CD8-positive, alpha-beta T cell (primary cell): ENCODE measurements at regions of chr11 and their contacts with region 1.

Region 1: GRCh38 chr11:66069715-66070603 is at the start of gene PACS1:
- DNase-seq: peak; percentile 56 to 94 (median 82)
- ATAC-seq: peak; percentile 68
- H3K4me3 ChIP-seq: peak within 1 kb of the TSS; percentile 62 to 74
- H3K4me3 Mint-ChIP-seq: peak within 1 kb of the TSS; percentile 92
- H3K27ac ChIP-seq: peak within 1 kb of the TSS; percentile 49 to 81
- H3K27ac Mint-ChIP-seq: peak within 1 kb of the TSS; percentile 95
- H3K4me1 ChIP-seq: peaks cover 41% of the 10 kb centered on the region
- H3K4me1 Mint-ChIP-seq: peaks cover 67% of the 10 kb centered on the region
- H3K27me3 ChIP-seq: no peaks in the 10 kb centered on the region
- H3K27me3 Mint-ChIP-seq: no peaks in the 10 kb centered on the region
- CTCF ChIP-seq: no peak
- total RNA-seq, gene PACS1: 161 to 176 TPM

Region 2: DNA sequence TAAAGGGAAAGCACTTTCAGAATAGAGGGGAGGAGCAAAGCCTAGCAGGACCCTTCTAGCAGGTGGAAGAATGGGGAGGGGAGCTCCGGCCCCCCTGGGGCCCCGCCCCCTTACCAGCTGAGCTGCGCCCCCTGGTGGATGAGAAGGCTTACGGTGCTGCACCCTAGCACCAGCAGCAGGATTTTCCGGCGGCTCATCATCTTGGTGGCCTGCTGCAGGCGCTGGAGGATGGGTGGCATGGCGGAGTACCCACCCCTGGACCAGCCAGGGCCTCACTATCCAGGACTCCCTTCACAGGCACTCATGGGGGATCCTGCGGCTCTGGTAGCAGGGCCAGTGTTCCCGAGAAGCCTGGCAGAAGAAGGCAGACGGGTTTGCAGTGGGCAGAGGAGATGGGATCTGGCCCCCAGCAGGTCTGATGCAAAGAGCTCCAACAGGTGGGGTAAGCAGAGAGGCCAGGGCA is 24.8 kb before region 1 on chr11:
- CTCF ChIA-PET with region 1: interaction called, 11 read pairs
- POLR2A ChIA-PET with region 1: interaction called, 8 read pairs
- intact Hi-C with region 1: no loop called
- DNase-seq: peak; percentile 60 to 90 (median 87)
- ATAC-seq: peak; percentile 98
- H3K4me3 ChIP-seq: no peak overlapping the region
- H3K4me3 Mint-ChIP-seq: no peak overlapping the region
- H3K27ac ChIP-seq: no peak overlapping the region
- H3K27ac Mint-ChIP-seq: no peak overlapping the region
- H3K4me1 ChIP-seq: peaks cover 13% of the 10 kb centered on the region
- H3K4me1 Mint-ChIP-seq: peaks cover 12% of the 10 kb centered on the region
- H3K27me3 ChIP-seq: no peaks in the 10 kb centered on the region
- H3K27me3 Mint-ChIP-seq: no peaks in the 10 kb centered on the region
- CTCF ChIP-seq: peak; percentile 83

Region 3: GRCh38 chr11:66081505-66081904 is 11.5 kb after region 1 on chr11:
- CTCF ChIA-PET with region 1: interaction called, 38 read pairs
- POLR2A ChIA-PET with region 1: interaction called, 43 read pairs
- intact Hi-C with region 1: loop called (anchors 1 kb)
- DNase-seq: peak; percentile 58 to 92 (median 85)
- ATAC-seq: peak; percentile 89
- H3K4me3 ChIP-seq: peak overlapping the region; percentile 28 to 40
- H3K4me3 Mint-ChIP-seq: peak overlapping the region; percentile 83
- H3K27ac ChIP-seq: peak overlapping the region; percentile 72 to 89
- H3K27ac Mint-ChIP-seq: peak overlapping the region; percentile 99
- H3K4me1 ChIP-seq: peaks cover 90% of the 10 kb centered on the region
- H3K4me1 Mint-ChIP-seq: peaks cover 92% of the 10 kb centered on the region
- H3K27me3 ChIP-seq: no peaks in the 10 kb centered on the region
- H3K27me3 Mint-ChIP-seq: no peaks in the 10 kb centered on the region
- CTCF ChIP-seq: no peak

Region 4: GRCh38 chr11:66106786-66107599 is 37.0 kb after region 1 on chr11:
- CTCF ChIA-PET with region 1: interaction called, 11 read pairs
- POLR2A ChIA-PET with region 1: interaction called, 10 read pairs
- intact Hi-C with region 1: loop called in 1 of 2 experiments (anchors 5 kb)
- DNase-seq: no peak
- ATAC-seq: no peak
- H3K4me3 ChIP-seq: no peak overlapping the region
- H3K4me3 Mint-ChIP-seq: peak overlapping the region; percentile 10
- H3K27ac ChIP-seq: peak overlapping the region in 1 of 2 experiments; percentile 55
- H3K27ac Mint-ChIP-seq: peak overlapping the region; percentile 79
- H3K4me1 ChIP-seq: peaks cover 84% of the 10 kb centered on the region
- H3K4me1 Mint-ChIP-seq: peaks cover 85% of the 10 kb centered on the region
- H3K27me3 ChIP-seq: no peaks in the 10 kb centered on the region
- H3K27me3 Mint-ChIP-seq: no peaks in the 10 kb centered on the region
- CTCF ChIP-seq: no peak

Region 5: GRCh38 chr11:66119348-66120133 is 49.6 kb after region 1 on chr11:
- CTCF ChIA-PET with region 1: interaction called, 74 read pairs
- POLR2A ChIA-PET with region 1: interaction called, 25 read pairs
- intact Hi-C with region 1: loop called in 1 of 2 experiments (anchors 5 kb)
- DNase-seq: no peak
- ATAC-seq: no peak
- H3K4me3 ChIP-seq: no peak overlapping the region
- H3K4me3 Mint-ChIP-seq: peak overlapping the region; percentile 20
- H3K27ac ChIP-seq: peak overlapping the region in 1 of 2 experiments; percentile 75
- H3K27ac Mint-ChIP-seq: peak overlapping the region; percentile 83
- H3K4me1 ChIP-seq: peaks cover 83% of the 10 kb centered on the region
- H3K4me1 Mint-ChIP-seq: peaks cover 87% of the 10 kb centered on the region
- H3K27me3 ChIP-seq: no peaks in the 10 kb centered on the region
- H3K27me3 Mint-ChIP-seq: no peaks in the 10 kb centered on the region
- CTCF ChIP-seq: no peak

Region 6: GRCh38 chr11:66136752-66137123 is 66.8 kb after region 1 on chr11:
- CTCF ChIA-PET with region 1: interaction called, 107 read pairs
- POLR2A ChIA-PET with region 1: interaction called, 7 read pairs
- intact Hi-C with region 1: loop called (anchors 1 kb)
- DNase-seq: no peak
- ATAC-seq: no peak
- H3K4me3 ChIP-seq: no peak overlapping the region
- H3K4me3 Mint-ChIP-seq: no peak overlapping the region
- H3K27ac ChIP-seq: no peak overlapping the region
- H3K27ac Mint-ChIP-seq: peak overlapping the region; percentile 22
- H3K4me1 ChIP-seq: peaks cover 25% of the 10 kb centered on the region
- H3K4me1 Mint-ChIP-seq: peaks cover 58% of the 10 kb centered on the region
- H3K27me3 ChIP-seq: no peaks in the 10 kb centered on the region
- H3K27me3 Mint-ChIP-seq: no peaks in the 10 kb centered on the region
- CTCF ChIP-seq: no peak